B cell (primary cell): ENCODE measurements at regions of chr3 and their contacts with region 1.

Region 1: DNA sequence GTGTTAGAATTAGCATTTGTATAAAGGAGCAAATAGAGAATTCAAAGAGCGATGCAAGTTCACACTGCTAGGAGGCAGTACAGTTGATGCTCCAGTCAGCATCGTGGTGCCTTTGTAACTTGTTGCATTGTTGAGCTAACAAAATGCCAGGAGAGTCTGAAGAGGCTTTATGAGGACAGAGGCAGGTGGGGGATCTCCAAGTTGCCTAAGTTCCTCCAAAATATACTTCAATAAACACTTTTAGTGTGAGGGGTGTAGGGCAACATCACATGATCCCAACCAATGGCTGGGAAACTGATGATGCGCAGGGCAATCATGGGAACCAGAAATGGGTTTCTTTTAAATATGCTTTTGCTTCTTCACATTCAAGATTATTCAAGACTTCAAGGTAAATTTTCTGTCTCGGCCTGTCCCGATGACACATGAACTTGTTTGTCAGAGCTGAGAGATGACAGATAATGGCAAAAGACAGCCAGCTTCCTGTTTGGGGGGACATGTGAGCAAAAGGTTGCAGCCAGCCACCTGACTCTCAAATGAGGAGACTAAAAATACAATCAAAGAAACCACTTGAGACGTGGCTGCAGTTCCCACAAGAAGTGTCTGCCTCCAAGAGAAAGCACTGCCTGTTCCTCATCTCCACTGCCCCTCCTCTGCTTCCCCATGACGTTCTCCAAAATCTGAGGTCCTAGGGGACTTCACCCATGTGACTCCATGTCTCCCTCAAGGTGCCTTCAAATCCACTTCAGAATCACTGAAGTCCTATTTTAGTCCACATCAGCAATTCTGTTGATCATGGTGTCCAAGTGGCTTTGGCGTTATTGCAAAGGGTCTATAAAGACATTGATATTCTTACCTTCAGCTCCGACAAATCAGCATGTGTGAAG is 39.3 kb downstream of the KLHL6 start:
- DNase-seq: peak; percentile 85
- ATAC-seq: peak; percentile 70
- H3K4me3 ChIP-seq: no peak overlapping the region
- H3K4me3 Mint-ChIP-seq: peak overlapping the region; percentile 78
- H3K27ac ChIP-seq: peak overlapping the region; percentile 53 to 86
- H3K27ac Mint-ChIP-seq: peak overlapping the region; percentile 95
- H3K4me1 ChIP-seq: peaks cover 58 to 69% of the 10 kb centered on the region in 2 donors
- H3K4me1 Mint-ChIP-seq: peaks cover 85% of the 10 kb centered on the region
- H3K27me3 ChIP-seq: no peaks in the 10 kb centered on the region
- H3K27me3 Mint-ChIP-seq: no peaks in the 10 kb centered on the region
- CTCF ChIP-seq: peak; percentile 36

Region 2: DNA sequence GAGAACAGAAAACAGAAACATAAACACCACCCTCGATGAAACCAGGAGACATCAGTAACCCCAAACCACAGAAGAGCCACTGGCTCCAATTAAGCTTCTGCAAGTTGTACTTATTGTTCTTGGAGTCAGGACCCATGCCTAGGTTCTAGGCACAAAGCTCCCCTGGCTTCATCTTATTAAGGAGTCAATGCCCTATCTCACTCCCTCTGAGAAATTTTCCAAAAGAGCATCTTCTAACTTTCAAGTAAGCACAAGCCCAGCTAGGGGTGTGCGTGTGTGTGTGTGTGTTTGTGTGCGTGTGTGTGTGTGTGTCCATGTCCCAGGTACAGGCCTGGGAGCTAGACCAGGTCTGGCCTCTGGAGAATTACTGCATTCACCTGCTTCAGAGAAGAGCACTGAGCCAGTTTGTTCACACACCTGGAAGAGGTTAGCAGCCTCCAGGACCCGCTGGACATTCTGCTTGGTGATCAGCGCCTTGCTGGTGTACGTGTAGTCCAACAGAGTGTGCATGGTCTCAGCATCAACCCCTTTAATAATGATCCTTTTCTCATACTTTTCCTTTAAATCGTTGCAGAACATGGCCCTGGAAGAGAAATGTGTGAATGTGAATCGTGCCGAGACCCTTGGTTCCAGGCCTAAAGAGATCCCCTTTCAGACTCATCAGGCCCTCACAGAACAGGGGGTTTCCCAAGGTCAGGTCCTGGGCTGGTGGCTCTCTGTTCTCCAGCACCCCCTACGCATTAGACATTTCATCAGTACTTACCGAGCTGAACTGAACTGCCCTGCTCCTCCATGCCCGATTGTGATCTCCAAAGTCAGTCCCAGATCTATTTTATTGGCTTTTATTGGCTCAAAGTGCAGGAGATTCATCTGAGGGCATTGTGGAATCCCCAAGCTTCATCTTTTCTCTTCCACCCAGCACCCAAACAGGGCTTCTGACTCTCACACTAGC is 11.5 kb after region 1 on chr3:
- CTCF ChIA-PET with region 1: interaction called, 7 read pairs
- POLR2A ChIA-PET with region 1: interaction called, 7 read pairs
- intact Hi-C with region 1: loop called (anchors 1 kb)
- DNase-seq: peak; percentile 73
- ATAC-seq: peak; percentile 73
- H3K4me3 ChIP-seq: peak overlapping the region in 2 of 5 experiments; percentile 6 to 12
- H3K4me3 Mint-ChIP-seq: peak overlapping the region; percentile 83
- H3K27ac ChIP-seq: peak overlapping the region; percentile 44 to 63
- H3K27ac Mint-ChIP-seq: peak overlapping the region; percentile 93
- H3K4me1 ChIP-seq: peaks cover 36 to 54% of the 10 kb centered on the region in 2 donors
- H3K4me1 Mint-ChIP-seq: peaks cover 77% of the 10 kb centered on the region
- H3K27me3 ChIP-seq: no peaks in the 10 kb centered on the region
- H3K27me3 Mint-ChIP-seq: no peaks in the 10 kb centered on the region
- CTCF ChIP-seq: no peak

Region 3: GRCh38 chr3:183537295-183537730 is 21.1 kb after region 1 on chr3:
- CTCF ChIA-PET with region 1: interaction called, 6 read pairs
- POLR2A ChIA-PET with region 1: interaction called, 9 read pairs
- intact Hi-C with region 1: loop called (anchors 2 kb)
- DNase-seq: no peak
- ATAC-seq: no peak
- H3K4me3 ChIP-seq: no peak overlapping the region
- H3K4me3 Mint-ChIP-seq: peak overlapping the region; percentile 77
- H3K27ac ChIP-seq: peak overlapping the region in 1 of 2 donors; percentile 56
- H3K27ac Mint-ChIP-seq: peak overlapping the region; percentile 94
- H3K4me1 ChIP-seq: peaks cover 80 to 96% of the 10 kb centered on the region in 2 donors
- H3K4me1 Mint-ChIP-seq: peaks cover 90% of the 10 kb centered on the region
- H3K27me3 ChIP-seq: no peaks in the 10 kb centered on the region
- H3K27me3 Mint-ChIP-seq: no peaks in the 10 kb centered on the region
- CTCF ChIP-seq: no peak

Region 4: DNA sequence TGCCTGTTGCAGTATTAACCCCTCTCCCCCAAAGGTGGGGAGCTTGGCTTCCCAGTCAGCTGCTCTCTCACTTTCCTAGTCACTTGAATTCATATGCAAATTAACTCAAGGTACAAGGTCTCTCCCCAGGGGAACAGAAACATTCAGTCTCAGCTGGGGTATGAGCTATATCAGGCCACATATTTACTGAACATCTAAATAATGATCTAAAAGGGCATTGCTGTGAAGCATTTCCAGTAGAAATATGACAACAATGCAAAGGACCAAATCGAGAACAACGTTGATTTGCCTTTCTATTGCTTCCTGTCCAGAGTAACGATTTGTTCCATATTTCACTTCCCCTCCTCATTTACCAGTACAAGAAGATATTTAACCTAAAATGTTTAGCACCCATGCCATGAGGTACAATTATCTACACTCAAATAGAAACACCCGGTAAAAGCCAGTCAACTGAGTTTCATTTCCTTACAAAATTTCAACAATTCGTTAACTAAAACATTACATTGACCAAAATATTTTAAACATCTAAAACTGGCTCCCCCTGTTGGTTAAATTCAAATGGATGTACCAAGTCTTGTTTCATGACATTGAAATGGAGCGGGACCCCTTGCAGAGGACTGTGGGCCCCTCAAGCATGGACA is 75.8 kb after region 1 on chr3:
- CTCF ChIA-PET with region 1: interaction called, 4 read pairs
- POLR2A ChIA-PET with region 1: interaction called, 3 read pairs
- intact Hi-C with region 1: loop called (anchors 2 kb)
- DNase-seq: peak; percentile 77
- ATAC-seq: peak; percentile 76
- H3K4me3 ChIP-seq: peak overlapping the region in 1 of 5 experiments; percentile 16
- H3K4me3 Mint-ChIP-seq: peak overlapping the region; percentile 56
- H3K27ac ChIP-seq: no peak overlapping the region
- H3K27ac Mint-ChIP-seq: peak overlapping the region; percentile 15
- H3K4me1 ChIP-seq: peaks cover 32 to 49% of the 10 kb centered on the region in 2 donors
- H3K4me1 Mint-ChIP-seq: peaks cover 47% of the 10 kb centered on the region
- H3K27me3 ChIP-seq: peaks cover 0 to 28% (median 5%) of the 10 kb centered on the region in 4 experiments
- H3K27me3 Mint-ChIP-seq: peaks cover 15% of the 10 kb centered on the region
- CTCF ChIP-seq: peak; percentile 71

Region 5: DNA sequence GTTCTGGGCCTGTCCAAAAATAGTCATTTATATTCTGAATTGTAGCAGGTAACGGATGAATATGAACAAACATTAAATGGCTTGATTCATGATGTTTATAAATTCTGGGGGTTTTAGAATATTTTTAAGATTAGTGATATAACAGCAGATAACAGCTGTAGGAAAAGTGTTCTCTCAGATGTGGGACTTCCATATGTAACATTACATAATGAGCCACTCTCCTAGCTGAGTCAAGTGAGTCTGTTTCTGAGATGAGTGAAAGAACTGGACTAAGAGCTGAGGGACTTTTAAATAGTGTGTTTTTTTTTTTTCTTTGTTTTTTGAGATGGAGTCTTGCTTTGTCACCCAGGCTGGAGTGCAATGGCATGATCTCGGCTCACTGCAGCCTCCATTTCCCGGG is 195.3 kb after region 1 on chr3:
- CTCF ChIA-PET with region 1: no interaction called
- POLR2A ChIA-PET with region 1: no interaction called
- intact Hi-C with region 1: no loop called
- DNase-seq: no peak
- ATAC-seq: no peak
- H3K4me3 ChIP-seq: no peak overlapping the region
- H3K4me3 Mint-ChIP-seq: no peak overlapping the region
- H3K27ac ChIP-seq: no peak overlapping the region
- H3K27ac Mint-ChIP-seq: no peak overlapping the region
- H3K4me1 ChIP-seq: no peaks in the 10 kb centered on the region
- H3K4me1 Mint-ChIP-seq: peaks cover 8% of the 10 kb centered on the region
- H3K27me3 ChIP-seq: no peaks in the 10 kb centered on the region
- H3K27me3 Mint-ChIP-seq: no peaks in the 10 kb centered on the region
- CTCF ChIP-seq: no peak